Activated T-helper 1 cell treated with anti-CD3 and anti-CD28 coated beads, Interleukin-12 subunit alpha, Interleukin-12 subunit beta, Interleukin-2, Interleukin-4 antibody, amounts not matched to agents 30 ng/mL and 10 ng/mL and 1 ng/mL, durations not matched to agents 14 hours and 24 hours and 36 hours (primary cell): ENCODE measurements at regions of chr6 and their contacts with region 1.

Region 1: DNA sequence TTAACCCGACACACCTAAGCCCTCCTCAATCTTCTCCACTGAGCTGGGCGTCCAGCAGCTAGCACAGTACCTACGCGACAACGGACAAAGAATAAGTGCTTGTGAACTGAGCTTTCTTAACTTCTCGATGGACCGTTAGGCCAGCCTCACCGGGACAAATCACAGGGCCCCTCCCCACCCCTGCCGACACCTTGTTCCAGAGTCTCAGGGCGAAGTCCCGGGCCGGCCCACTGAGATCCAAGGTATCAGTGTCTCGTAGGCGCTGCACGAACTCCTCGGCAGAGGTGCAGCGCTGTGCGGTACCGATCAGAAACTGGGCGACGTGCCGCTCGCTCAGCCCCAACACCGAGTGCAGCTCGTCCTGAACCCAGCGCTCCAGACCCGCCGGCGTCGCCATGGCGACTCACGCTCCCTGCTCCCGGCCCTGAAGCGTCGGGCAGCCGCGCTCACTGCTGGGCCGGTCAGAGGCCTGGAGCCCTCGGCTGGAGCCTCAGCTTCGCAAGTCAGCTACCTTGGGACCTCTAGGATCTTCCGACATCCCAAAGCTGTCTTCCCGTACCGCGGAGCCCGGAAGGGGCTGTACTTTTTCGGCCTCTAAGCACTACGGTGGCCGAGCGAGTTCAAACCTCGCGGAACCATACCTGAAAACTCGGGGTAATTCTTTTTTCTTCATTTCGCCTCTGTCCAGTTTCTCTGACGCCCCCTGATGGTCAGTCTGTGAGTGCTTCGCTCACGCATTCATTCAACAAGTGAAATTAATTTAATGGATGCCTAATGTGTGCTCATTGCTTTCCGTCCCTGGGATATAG is at the start of gene DHX16:
- DNase-seq: peak; percentile 85
- H3K4me3 Mint-ChIP-seq: peak within 1 kb of the TSS; percentile 87
- H3K27ac Mint-ChIP-seq: peak within 1 kb of the TSS; percentile 76
- H3K4me1 Mint-ChIP-seq: peaks cover 28% of the 10 kb centered on the region
- H3K27me3 Mint-ChIP-seq: no peaks in the 10 kb centered on the region
- total RNA-seq, gene DHX16: 52.0 and 54.2 TPM in 2 replicates

Region 2: DNA sequence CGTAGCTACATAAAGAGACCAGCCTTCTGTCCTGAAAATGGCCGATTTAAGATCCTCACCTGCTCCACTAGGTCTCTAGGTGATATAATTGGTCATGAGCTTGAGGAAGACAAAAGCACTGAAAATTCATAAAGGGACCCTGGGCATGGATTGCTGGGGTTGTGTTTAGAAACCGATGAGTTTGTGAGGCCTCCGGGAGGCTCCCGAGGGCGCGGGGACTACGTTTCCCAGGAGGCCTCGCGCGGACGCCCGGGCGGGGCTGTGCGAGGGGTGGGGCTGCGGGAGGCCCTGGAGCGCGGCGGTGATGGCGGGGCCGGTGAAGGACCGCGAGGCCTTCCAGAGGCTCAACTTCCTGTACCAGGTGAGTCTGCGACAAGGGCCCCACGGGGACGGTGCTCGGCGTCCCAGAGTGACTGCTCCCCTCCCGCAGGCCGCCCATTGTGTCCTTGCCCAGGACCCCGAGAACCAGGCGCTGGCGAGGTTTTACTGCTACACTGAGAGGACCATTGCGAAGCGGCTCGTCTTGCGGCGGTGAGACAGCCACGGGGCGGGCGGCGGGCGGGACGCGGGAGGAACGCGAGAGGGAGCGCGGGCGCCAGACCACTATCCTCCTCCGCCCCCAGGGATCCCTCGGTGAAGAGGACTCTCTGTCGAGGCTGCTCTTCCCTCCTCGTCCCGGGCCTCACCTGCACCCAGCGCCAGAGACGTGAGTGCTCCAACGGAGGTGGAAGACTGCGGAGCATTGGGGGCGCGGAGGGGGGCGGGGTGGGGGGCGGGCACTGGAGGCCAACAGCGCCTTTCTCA is 327.6 kb before region 1 on chr6 and contains the start of gene RPP21:
- intact Hi-C with region 1: loop called (anchors 5 kb)
- DNase-seq: peak; percentile 84
- H3K4me3 Mint-ChIP-seq: peak within 1 kb of the TSS; percentile 91
- H3K27ac Mint-ChIP-seq: peak within 1 kb of the TSS; percentile 80
- H3K4me1 Mint-ChIP-seq: peaks cover 39% of the 10 kb centered on the region
- H3K27me3 Mint-ChIP-seq: peaks cover 5% of the 10 kb centered on the region
- total RNA-seq, gene RPP21: 54.2 and 62.8 TPM in 2 replicates

Region 3: GRCh38 chr6:30483677-30484279 is 188.9 kb before region 1 on chr6:
- intact Hi-C with region 1: loop called (anchors 5 kb)
- DNase-seq: no peak
- H3K4me3 Mint-ChIP-seq: no peak overlapping the region
- H3K27ac Mint-ChIP-seq: no peak overlapping the region
- H3K4me1 Mint-ChIP-seq: peaks cover 44% of the 10 kb centered on the region
- H3K27me3 Mint-ChIP-seq: peaks cover 40% of the 10 kb centered on the region

Region 4: DNA sequence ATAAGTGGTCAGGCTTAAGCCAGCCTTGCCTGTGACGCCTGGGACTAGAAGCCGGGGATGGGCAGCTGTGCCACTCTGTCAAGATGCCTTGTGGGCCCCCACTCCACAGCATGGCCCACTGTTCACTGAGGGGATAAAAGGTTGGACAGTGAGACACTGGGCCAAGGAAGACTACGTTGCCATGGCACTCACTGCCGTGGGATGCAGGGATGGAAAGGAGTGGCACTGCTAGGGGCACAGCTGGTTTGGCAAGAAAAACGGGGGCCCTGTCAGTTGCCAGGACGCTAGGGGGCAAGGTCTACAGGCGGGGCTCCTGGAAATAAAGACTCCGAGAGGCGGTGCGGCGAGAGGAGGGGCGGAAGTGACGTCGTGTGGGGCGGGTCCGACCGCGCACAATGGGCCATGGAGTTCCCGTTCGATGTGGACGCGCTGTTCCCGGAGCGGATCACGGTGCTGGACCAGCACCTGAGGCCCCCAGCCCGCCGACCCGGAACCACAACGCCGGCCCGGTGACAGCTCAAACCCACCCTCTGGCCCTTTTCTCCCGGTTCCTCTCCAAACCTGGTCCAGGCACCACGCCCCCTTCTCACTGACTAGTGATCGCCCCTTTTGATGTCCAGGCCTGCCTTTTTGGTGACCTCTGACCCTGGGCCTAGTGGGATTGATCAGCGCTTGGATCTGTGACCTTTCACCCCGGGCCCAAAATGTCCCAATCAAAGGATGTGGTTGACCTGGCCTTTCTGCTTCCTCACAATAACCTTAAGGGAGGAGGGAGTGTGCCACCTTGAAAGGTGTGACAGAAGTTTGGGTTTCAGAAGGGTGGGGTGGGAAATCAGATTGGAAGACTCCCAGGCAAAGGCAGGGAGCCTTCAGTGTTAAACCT is 45.9 kb before region 1 on chr6 and contains the start of gene ATAT1:
- intact Hi-C with region 1: loop called (anchors 1 kb)
- DNase-seq: peak; percentile 84
- H3K4me3 Mint-ChIP-seq: peak within 1 kb of the TSS; percentile 91
- H3K27ac Mint-ChIP-seq: peak within 1 kb of the TSS; percentile 95
- H3K4me1 Mint-ChIP-seq: peaks cover 27% of the 10 kb centered on the region
- H3K27me3 Mint-ChIP-seq: no peaks in the 10 kb centered on the region
- total RNA-seq, gene ATAT1: 11.6 and 13.4 TPM in 2 replicates

Region 5: DNA sequence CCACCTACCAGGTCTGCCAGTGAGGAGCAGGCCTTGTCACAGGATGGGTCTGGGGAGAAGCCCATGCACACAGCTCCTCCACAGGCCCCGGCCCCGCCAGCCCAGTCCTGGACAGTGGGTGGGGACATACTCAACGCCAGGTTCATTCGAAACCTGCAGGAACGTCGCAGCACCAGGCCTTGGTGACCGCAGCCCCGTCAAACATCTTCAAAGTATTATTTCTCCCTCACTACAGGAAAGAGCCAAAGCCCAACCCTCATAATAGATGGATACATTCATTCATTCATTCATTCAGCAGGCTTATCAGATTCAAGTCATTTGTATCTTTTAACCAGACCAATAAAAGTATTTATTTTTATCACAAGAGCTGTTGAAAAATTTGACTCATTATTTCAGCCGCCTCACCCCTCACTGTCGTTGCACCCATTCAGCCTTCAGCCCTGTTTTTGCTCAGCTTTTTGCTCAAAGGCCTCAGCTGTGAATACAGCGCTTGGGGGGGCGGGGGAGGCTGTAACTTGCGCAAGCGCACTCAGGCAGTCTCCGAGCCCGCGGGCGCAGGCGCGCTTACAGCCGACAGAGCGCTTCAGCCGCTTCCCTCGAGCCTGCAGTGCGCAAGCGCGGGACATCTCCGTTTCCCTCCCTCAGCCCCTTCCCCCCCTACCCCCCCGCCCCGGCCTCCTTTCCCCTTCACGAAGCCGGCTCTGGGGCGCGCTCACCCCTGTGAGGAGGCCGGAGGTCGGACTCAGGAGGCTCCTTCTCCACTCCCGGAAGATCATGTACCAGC is 26.0 kb before region 1 on chr6 and contains the start of gene C6orf136:
- intact Hi-C with region 1: loop called (anchors 1 kb)
- DNase-seq: peak; percentile 89
- H3K4me3 Mint-ChIP-seq: peak within 1 kb of the TSS; percentile 90
- H3K27ac Mint-ChIP-seq: peak within 1 kb of the TSS; percentile 91
- H3K4me1 Mint-ChIP-seq: peaks cover 23% of the 10 kb centered on the region
- H3K27me3 Mint-ChIP-seq: no peaks in the 10 kb centered on the region
- total RNA-seq, gene C6orf136: 23.9 and 36.0 TPM in 2 replicates

Region 6: DNA sequence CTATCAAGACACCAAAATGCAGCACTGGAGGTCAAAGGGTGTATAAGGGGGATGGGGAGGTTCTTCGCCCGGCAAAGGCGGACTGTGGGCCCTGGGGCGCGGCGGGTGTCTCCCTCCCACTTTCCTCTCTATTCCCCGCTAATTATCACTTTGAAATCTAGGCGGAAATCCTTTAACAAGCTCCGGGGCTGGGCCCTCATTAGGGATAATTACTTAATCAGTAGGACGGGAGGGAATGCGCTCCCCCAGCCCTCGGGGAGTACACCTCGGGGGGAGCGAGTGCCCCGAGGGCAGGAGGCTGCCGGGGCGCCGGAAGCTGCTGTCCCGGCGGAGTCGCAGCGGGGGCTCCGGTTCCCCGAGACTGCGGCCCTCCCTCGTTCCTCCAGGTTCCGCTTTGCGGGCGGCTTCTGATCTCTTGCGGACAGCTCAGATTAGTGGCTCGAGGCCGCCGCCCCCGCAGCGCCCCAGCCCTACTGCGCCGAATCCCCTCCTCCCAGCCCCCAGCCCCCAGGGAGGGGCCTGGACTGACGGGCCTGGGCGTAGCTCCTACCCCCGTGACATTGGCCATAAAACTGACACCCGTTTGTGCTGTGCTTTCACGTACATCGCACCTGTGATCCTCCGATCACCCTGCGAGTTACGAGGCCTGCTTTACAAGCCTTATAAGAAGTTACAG is 282.9 kb after region 1 on chr6:
- intact Hi-C with region 1: no loop called
- DNase-seq: peak; percentile 27
- H3K4me3 Mint-ChIP-seq: peak overlapping the region; percentile 54
- H3K27ac Mint-ChIP-seq: no peak overlapping the region
- H3K4me1 Mint-ChIP-seq: no peaks in the 10 kb centered on the region
- H3K27me3 Mint-ChIP-seq: peaks cover 70% of the 10 kb centered on the region